SK-N-SH (cell line): ENCODE measurements at regions of chr3 and their contacts with region 1.

Region 1: DNA sequence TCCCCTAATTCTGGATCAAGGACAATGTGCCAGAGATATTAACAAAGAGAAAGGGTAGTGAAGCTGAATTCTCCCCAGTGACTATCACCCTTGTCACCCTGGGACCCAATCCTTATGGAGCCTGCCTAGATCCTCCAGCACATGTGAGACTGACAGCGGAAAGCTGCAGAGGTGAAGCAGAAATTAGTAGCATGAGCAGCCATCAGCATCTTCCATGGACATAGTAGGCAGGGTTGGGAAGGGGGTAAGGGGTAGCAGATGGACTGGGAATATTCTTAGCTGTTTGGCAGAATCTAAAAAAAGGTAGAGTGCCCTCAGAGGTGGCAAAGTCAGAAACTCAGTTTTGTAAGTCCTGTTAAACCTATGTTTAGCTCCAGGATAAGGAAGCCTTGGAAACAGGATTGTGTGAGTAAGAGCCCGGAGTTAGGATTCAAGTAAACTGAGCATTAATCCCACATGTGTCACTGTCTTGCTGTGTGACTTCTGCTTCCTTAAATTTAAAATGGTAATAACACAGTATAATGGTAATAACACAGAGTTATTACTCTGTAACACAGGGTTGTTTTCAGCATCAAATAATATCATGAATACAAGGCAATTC is 14.5 kb downstream of the GOLIM4 start:
- DNase-seq: no peak
- H3K4me3 ChIP-seq: no peak overlapping the region
- H3K27ac ChIP-seq: peak overlapping the region in 1 of 2 experiments; percentile 15; a peak in 2 of 4 replicates
- H3K4me1 ChIP-seq: peaks cover 7 to 15% of the 10 kb centered on the region in 2 experiments; a peak in 3 of 4 replicates
- H3K27me3 ChIP-seq: no peaks in the 10 kb centered on the region
- CTCF ChIP-seq: no peak
- EP300 ChIP-seq: no peak
- RAD21 ChIP-seq: no peak

Region 2: GRCh38 chr3:168095611-168096209 is 14.4 kb after region 1 on chr3 and contains the start of gene GOLIM4:
- CTCF ChIA-PET with region 1: interaction called, 23 read pairs
- POLR2A ChIA-PET with region 1: interaction called, 3 read pairs
- DNase-seq: peak; percentile 95
- H3K4me3 ChIP-seq: peak within 1 kb of the TSS; percentile 88 to 91
- H3K27ac ChIP-seq: peak within 1 kb of the TSS; percentile 88 to 97
- H3K4me1 ChIP-seq: peaks cover 14 to 22% of the 10 kb centered on the region in 2 experiments; a peak in 3 of 4 replicates
- H3K27me3 ChIP-seq: no peaks in the 10 kb centered on the region
- CTCF ChIP-seq: peak; percentile 20; the same call in 1 of the 2 replicates
- EP300 ChIP-seq: no peak; a peak in 1 of 4 replicates
- RAD21 ChIP-seq: 0 out of 2 replicates have a peak, but pooled peaks have one; percentile 1
- polyA plus RNA-seq, gene GOLIM4: 38.3 and 42.3 TPM in 2 replicates

Region 3: GRCh38 chr3:168165390-168166269 is 84.4 kb after region 1 on chr3:
- CTCF ChIA-PET with region 1: interaction called, 15 read pairs
- POLR2A ChIA-PET with region 1: no interaction called
- DNase-seq: peak; percentile 64
- H3K4me3 ChIP-seq: no peak overlapping the region; a peak in 1 of 4 replicates
- H3K27ac ChIP-seq: no peak overlapping the region
- H3K4me1 ChIP-seq: no peaks in the 10 kb centered on the region
- H3K27me3 ChIP-seq: no peaks in the 10 kb centered on the region
- CTCF ChIP-seq: peak; percentile 87
- EP300 ChIP-seq: no peak
- RAD21 ChIP-seq: peak; percentile 96

Region 4: GRCh38 chr3:168213920-168214319 is 132.6 kb after region 1 on chr3:
- CTCF ChIA-PET with region 1: no interaction called
- POLR2A ChIA-PET with region 1: no interaction called
- DNase-seq: no peak
- H3K4me3 ChIP-seq: no peak overlapping the region; a peak in 1 of 4 replicates
- H3K27ac ChIP-seq: no peak overlapping the region
- H3K4me1 ChIP-seq: peaks cover 0 to 2% of the 10 kb centered on the region in 2 experiments; a peak in 1 of 4 replicates
- H3K27me3 ChIP-seq: no peaks in the 10 kb centered on the region
- CTCF ChIP-seq: no peak
- EP300 ChIP-seq: no peak
- RAD21 ChIP-seq: no peak